ENCODE measurements at regions of chr1 and their contacts with region 1.

Region 1: GRCh38 chr1:200302192-200302920 is 107.5 kb downstream of the ZNF281 start:
- DNase-seq: peak; percentile 32 to 84 (median 68)
- ATAC-seq: peak; percentile 97
- H3K4me3 ChIP-seq: peak overlapping the region; percentile 77 to 82
- H3K4me3 Mint-ChIP-seq: peak overlapping the region; percentile 95
- H3K27ac ChIP-seq: peak overlapping the region; percentile 60 to 65
- H3K27ac Mint-ChIP-seq: peak overlapping the region; percentile 93
- H3K4me1 ChIP-seq: peaks cover 17% of the 10 kb centered on the region
- H3K4me1 Mint-ChIP-seq: peaks cover 12% of the 10 kb centered on the region
- H3K27me3 ChIP-seq: no peaks in the 10 kb centered on the region
- H3K27me3 Mint-ChIP-seq: peaks cover 6% of the 10 kb centered on the region
- CTCF ChIP-seq: no peak

Region 2: GRCh38 chr1:198598796-198599321 is 1703.5 kb before region 1 on chr1:
- CTCF ChIA-PET with region 1: no interaction called
- POLR2A ChIA-PET with region 1: no interaction called
- intact Hi-C with region 1: loop called in 1 of 2 experiments (anchors 10 kb)
- DNase-seq: peak in 2 of 9 experiments; percentile 17 to 31
- ATAC-seq: peak; percentile 59
- H3K4me3 ChIP-seq: no peak overlapping the region
- H3K4me3 Mint-ChIP-seq: peak overlapping the region; percentile 63
- H3K27ac ChIP-seq: peak overlapping the region in 1 of 2 experiments; percentile 58
- H3K27ac Mint-ChIP-seq: peak overlapping the region; percentile 91
- H3K4me1 ChIP-seq: peaks cover 65% of the 10 kb centered on the region
- H3K4me1 Mint-ChIP-seq: peaks cover 86% of the 10 kb centered on the region
- H3K27me3 ChIP-seq: no peaks in the 10 kb centered on the region
- H3K27me3 Mint-ChIP-seq: no peaks in the 10 kb centered on the region
- CTCF ChIP-seq: no peak

Region 3: DNA sequence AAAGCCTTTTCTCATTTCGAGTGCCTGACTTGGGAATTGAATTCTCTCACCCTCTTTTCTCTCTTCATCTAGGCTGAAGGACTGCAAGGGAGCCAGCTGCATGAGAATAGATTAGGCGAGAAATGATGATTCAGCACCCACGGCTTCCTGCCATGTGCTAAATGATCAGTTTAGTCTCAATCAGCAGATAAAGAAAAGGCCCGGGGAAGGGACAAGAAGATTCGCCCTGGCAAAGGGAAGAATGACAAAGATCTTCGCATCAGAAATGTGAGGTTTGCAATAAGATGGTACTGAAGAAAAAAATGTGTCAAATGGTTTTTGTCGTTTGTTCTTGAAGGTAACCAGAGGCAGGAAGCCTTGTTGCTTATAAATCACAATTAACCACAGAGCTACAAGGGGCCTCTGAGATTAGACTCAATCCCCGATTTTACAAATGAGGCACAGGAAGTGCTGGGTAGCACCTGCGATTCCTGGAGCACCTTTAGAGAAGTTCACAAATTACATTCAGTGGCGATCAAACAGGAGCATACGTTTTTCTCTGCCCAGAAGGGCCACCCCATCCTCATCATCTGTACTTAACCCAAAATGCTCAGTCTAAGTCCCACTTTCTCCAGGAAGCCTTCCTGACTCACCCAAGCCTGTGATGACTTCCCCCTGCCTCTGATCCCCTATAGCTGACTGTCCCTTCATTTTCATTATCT is 75.9 kb before region 1 on chr1:
- CTCF ChIA-PET with region 1: no interaction called
- POLR2A ChIA-PET with region 1: no interaction called
- intact Hi-C with region 1: loop called in 1 of 2 experiments (anchors 10 kb)
- DNase-seq: peak in 3 of 9 experiments; percentile 15 to 20 (median 18)
- ATAC-seq: peak; percentile 34
- H3K4me3 ChIP-seq: no peak overlapping the region
- H3K4me3 Mint-ChIP-seq: peak overlapping the region; percentile 49
- H3K27ac ChIP-seq: no peak overlapping the region
- H3K27ac Mint-ChIP-seq: peak overlapping the region; percentile 10
- H3K4me1 ChIP-seq: peaks cover 6% of the 10 kb centered on the region
- H3K4me1 Mint-ChIP-seq: peaks cover 14% of the 10 kb centered on the region
- H3K27me3 ChIP-seq: no peaks in the 10 kb centered on the region
- H3K27me3 Mint-ChIP-seq: peaks cover 9% of the 10 kb centered on the region
- CTCF ChIP-seq: no peak

Region 4: DNA sequence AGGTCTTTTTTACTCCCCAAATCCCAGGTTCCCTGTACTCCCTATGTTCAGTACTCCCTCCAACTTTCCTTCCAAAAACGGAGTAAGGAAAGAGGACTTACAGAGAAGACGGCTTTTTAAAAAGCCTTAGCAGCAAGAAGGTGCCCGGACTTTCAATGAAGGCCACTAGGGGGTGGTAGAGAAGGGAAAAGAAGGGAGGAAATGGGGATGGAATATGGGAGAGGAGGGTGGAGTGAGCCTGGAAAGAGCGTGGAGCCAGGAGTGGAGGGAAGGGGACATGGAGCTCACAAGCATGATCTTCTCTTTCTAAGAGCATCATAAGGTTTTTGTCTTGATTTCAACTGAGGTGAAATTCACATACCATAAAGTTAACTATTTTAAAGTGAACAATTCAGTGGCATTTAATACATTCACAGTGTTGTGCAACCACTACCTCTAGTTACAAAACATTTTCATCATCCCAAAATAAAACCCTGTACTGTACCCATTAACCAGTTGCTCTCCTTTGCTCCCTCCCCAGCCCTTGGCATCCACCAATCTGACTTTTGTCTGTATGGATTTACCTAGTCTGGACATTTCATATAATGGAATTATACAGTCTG is 22.4 kb before region 1 on chr1:
- CTCF ChIA-PET with region 1: interaction called, 12 read pairs
- POLR2A ChIA-PET with region 1: no interaction called
- intact Hi-C with region 1: no loop called
- DNase-seq: peak in 4 of 9 experiments; percentile 19 to 49 (median 34)
- ATAC-seq: no peak
- H3K4me3 ChIP-seq: no peak overlapping the region
- H3K4me3 Mint-ChIP-seq: no peak overlapping the region
- H3K27ac ChIP-seq: no peak overlapping the region
- H3K27ac Mint-ChIP-seq: no peak overlapping the region
- H3K4me1 ChIP-seq: no peaks in the 10 kb centered on the region
- H3K4me1 Mint-ChIP-seq: no peaks in the 10 kb centered on the region
- H3K27me3 ChIP-seq: no peaks in the 10 kb centered on the region
- H3K27me3 Mint-ChIP-seq: no peaks in the 10 kb centered on the region
- CTCF ChIP-seq: peak; percentile 58

Region 5: GRCh38 chr1:200330741-200331430 is 28.5 kb after region 1 on chr1:
- CTCF ChIA-PET with region 1: no interaction called
- POLR2A ChIA-PET with region 1: no interaction called
- intact Hi-C with region 1: no loop called
- DNase-seq: no peak
- ATAC-seq: no peak
- H3K4me3 ChIP-seq: no peak overlapping the region
- H3K4me3 Mint-ChIP-seq: no peak overlapping the region
- H3K27ac ChIP-seq: no peak overlapping the region
- H3K27ac Mint-ChIP-seq: no peak overlapping the region
- H3K4me1 ChIP-seq: no peaks in the 10 kb centered on the region
- H3K4me1 Mint-ChIP-seq: no peaks in the 10 kb centered on the region
- H3K27me3 ChIP-seq: no peaks in the 10 kb centered on the region
- H3K27me3 Mint-ChIP-seq: no peaks in the 10 kb centered on the region
- CTCF ChIP-seq: no peak

Region 6: DNA sequence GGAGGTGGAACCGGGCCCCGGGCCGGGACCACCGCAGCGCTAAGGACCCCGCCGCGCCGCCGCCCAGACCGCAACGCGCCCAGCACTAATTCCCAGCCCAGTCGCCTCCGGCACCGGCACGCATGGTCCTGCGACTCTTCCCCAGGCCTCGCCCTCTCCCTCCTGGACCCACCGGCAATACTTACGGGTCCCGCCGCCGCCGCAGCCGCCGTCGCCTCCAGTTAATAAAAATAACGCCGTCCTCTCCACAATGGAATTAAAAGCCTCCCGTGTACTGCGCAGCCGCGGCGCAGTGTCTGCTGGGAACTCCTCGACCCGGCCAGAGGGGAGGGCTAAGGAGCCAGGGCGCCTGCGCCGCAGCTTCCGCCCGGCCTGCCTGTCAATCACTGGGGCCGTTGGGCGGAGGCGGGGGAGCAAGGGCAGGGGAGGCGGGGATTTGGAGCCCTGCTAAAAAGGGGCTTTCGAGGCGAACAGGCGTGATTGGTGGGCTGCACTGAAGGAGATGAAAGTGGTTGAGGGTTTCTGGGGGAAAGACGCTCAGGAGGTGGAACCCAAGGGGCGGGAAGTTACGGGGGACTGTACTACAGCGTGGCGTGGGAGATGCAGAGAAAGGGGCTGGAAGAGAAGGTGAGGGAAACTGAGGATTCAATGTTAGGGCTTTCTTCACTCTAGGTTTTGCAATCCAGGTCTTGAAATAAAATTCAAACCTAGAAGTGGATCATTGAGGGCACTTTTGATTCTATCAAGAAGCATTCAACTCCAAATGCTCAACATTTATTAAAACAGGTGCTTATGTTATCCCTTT is 107.6 kb after region 1 on chr1 and contains the start of gene ZNF281:
- CTCF ChIA-PET with region 1: no interaction called
- POLR2A ChIA-PET with region 1: no interaction called
- intact Hi-C with region 1: loop called (anchors 2 to 5 kb)
- DNase-seq: peak; percentile 91 to 98 (median 95)
- ATAC-seq: peak; percentile 95
- H3K4me3 ChIP-seq: peak within 1 kb of the TSS; percentile 78 to 95
- H3K4me3 Mint-ChIP-seq: peak within 1 kb of the TSS; percentile 99
- H3K27ac ChIP-seq: peak within 1 kb of the TSS; percentile 71 to 76
- H3K27ac Mint-ChIP-seq: peak within 1 kb of the TSS; percentile 98
- H3K4me1 ChIP-seq: peaks cover 47% of the 10 kb centered on the region
- H3K4me1 Mint-ChIP-seq: peaks cover 52% of the 10 kb centered on the region
- H3K27me3 ChIP-seq: no peaks in the 10 kb centered on the region
- H3K27me3 Mint-ChIP-seq: no peaks in the 10 kb centered on the region
- CTCF ChIP-seq: no peak
- total RNA-seq, gene ZNF281: 31.0 to 32.9 TPM